BJ (cell line): ENCODE measurements at regions of chr1 and their contacts with region 1.

Region 1: DNA sequence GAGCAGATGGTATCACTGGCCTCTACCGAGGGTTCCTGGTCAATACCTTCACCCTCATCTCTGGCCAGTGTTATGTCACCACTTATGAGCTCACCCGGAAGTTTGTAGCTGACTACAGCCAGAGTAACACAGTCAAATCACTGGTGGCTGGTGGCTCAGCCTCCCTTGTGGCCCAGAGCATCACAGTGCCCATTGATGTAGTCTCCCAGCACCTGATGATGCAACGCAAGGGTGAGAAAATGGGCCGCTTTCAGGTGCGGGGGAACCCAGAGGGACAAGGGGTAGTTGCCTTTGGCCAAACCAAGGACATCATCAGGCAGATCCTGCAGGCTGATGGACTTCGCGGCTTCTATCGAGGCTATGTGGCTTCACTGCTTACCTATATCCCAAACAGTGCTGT is 6.1 kb downstream of the SLC25A44 start:
- DNase-seq: no peak
- H3K4me3 ChIP-seq: no peak overlapping the region
- H3K27me3 ChIP-seq: no peaks in the 10 kb centered on the region
- CTCF ChIP-seq: no peak

Region 2: GRCh38 chr1:156212833-156213643 is 13.0 kb after region 1 on chr1 and contains the start of gene PMF1:
- CTCF ChIA-PET with region 1: interaction called, 7 read pairs
- POLR2A ChIA-PET with region 1: interaction called, 13 read pairs
- DNase-seq: peak; percentile 83
- H3K4me3 ChIP-seq: peak within 1 kb of the TSS; percentile 47
- H3K27me3 ChIP-seq: no peaks in the 10 kb centered on the region
- CTCF ChIP-seq: no peak
- polyA plus RNA-seq, gene PMF1: 55.0 and 73.1 TPM in 2 replicates